ENCODE measurements at regions of chr14 and their contacts with region 1.

Region 1: GRCh38 chr14:65412032-65412846 is at the start of gene FUT8:
- DNase-seq: peak; percentile 92
- ATAC-seq: peak; percentile 86
- H3K4me3 Mint-ChIP-seq: peak within 1 kb of the TSS; percentile 97
- H3K27ac Mint-ChIP-seq: peak within 1 kb of the TSS; percentile 94
- H3K4me1 Mint-ChIP-seq: peaks cover 39% of the 10 kb centered on the region
- H3K27me3 Mint-ChIP-seq: no peaks in the 10 kb centered on the region
- total RNA-seq, gene FUT8: 82.7 to 86.4 TPM

Region 2: DNA sequence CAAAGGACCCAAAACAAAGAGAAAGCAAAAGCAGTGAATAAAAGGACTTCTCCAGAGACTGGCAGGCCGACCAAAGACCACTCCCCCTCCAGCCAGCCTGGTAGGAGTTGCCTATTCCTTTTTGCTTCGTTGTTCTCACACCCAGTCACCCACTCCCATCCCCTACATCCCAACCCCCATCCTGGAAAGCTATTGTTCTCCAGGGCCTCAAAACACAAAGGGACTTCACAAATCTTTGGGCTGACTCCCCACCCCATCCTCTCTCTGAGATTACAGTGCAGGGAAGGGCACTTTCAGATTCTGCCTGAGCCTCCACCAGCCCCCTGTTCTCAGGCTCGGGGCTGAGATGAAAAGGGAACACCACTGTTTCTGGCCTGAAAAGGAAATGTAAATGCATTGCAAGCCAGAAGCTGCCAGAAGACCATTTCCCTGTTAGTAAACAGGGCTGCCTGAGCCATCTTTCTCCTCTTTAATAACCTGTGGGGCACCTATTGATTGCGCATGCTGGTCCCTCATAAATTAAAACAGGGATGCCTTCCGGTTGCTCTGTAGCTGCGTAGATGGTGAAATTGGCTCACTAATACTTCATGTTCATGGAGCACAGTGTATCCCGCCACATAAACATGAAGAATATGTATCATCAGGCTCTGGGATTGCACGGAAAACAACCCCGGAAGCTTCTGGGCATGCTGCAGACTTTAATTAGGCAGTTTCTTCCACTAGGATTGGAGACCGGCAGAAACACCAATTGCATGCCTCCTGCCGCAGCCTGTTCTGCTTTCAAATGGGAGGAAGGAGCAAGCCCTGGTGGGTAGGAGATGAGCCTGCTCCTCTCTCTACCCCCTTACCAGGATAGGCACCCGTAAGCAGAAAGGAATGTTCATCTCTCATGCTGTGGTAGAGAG is 130.0 kb before region 1 on chr14:
- POLR2A ChIA-PET with region 1: interaction called, 59 read pairs
- DNase-seq: peak; percentile 53
- ATAC-seq: peak; percentile 56
- H3K4me3 Mint-ChIP-seq: peak overlapping the region; percentile 79
- H3K27ac Mint-ChIP-seq: peak overlapping the region; percentile 96
- H3K4me1 Mint-ChIP-seq: peaks cover 27% of the 10 kb centered on the region
- H3K27me3 Mint-ChIP-seq: no peaks in the 10 kb centered on the region

Region 3: GRCh38 chr14:65287264-65288131 is 124.7 kb before region 1 on chr14:
- POLR2A ChIA-PET with region 1: interaction called, 59 read pairs
- DNase-seq: peak; percentile 80
- ATAC-seq: peak; percentile 76
- H3K4me3 Mint-ChIP-seq: peak overlapping the region; percentile 89
- H3K27ac Mint-ChIP-seq: peak overlapping the region; percentile 98
- H3K4me1 Mint-ChIP-seq: peaks cover 62% of the 10 kb centered on the region
- H3K27me3 Mint-ChIP-seq: no peaks in the 10 kb centered on the region

Region 4: GRCh38 chr14:65336191-65336591 is 76.0 kb before region 1 on chr14:
- POLR2A ChIA-PET with region 1: interaction called, 10 read pairs
- DNase-seq: peak; percentile 49
- ATAC-seq: peak; percentile 93
- H3K4me3 Mint-ChIP-seq: peak overlapping the region; percentile 88
- H3K27ac Mint-ChIP-seq: peak overlapping the region; percentile 90
- H3K4me1 Mint-ChIP-seq: peaks cover 59% of the 10 kb centered on the region
- H3K27me3 Mint-ChIP-seq: no peaks in the 10 kb centered on the region

Measured in activated naive CD8-positive, alpha-beta T cell treated with anti-CD3 and anti-CD28 coated beads, Interleukin-2, amount 10 ng/mL, durations not matched to agents 7 days and 5 days (primary cell).